GM18951 (cell line): ENCODE measurements at regions of chr11 and their contacts with region 1.

Region 1: DNA sequence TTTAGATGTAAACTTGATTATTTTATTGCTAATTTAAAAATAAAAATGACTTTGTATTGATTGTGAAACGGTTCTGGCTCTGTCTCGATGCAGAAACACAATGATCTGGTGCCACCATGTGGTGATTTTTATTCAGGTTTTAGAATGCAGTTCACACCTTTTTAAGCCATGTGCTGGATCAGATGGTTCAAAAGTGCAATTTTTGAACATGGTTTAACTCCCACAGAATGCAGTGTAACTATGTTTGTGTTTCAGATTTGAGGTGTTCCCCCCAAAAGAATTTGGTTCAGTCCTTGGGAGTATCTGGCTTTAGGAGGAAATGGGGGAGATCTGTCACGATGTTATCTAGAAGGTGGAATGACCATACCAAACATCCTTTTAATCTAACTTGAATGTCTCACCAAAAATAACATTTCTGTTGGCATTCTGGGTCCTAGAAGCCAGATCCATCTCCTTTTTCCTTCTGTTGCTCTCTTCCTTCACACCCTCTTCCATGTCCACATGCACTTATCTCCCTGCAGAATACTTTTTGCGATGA is 7.9 kb downstream of the MRPL16 start:
- POLR2A ChIP-seq: no peak

Region 2: GRCh38 chr11:59754859-59755700 is 47.6 kb before region 1 on chr11 and contains the start of gene STX3:
- in situ Hi-C with region 1: loop called (anchors 5 kb)
- POLR2A ChIP-seq: no peak